Activated CD4-positive, alpha-beta T cell treated with anti-CD3 and anti-CD28 coated beads, Interleukin-2, amount 10 ng/mL, durations not matched to agents 24 days and 14 days (primary cell): ENCODE measurements at regions of chr3 and their contacts with region 1.

Region 1: DNA sequence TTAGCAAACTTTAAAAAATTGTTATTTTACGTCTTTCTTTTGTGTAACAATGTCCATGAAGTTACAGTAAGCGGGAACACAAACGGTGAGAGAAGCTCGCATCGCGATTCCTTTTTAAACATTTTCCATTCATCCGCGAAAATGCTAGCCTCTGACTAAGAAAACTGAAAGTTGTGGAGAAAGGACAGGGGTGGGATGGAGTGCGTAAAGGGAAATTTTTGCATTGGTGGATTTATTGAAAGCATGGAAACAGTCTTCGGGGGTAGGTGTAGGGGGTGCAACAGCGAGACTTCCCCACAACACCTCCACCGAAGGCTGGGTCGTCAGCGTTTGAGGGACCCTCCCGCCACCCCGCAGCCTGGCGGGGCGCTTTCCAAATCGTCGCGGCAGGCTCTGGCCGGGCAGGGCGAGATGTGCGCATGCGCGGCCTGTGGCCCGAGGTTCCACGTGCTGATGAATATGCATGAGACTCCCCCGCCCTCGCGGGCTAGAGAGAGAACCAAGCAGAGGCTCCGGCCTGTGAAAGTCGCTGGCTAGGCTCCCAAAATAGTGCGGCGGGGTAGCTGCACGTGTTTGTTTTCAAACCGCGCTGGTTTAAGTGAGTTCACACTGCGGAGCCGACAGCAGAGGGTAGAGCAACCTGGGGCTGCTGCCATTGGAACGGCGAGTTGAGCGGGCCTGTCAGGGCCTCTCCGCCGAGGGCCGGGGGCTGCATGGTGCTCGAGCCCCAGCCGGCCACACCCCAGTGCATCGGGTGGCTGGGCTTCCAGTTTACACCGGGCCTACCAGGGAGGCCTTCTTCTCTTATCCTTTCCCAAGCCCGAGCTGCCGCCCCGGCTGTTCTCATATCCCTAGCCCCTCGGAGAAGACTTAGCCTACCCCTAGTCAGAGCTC is 9.9 kb downstream of the ZIC1 start:
- DNase-seq: no peak
- H3K4me3 Mint-ChIP-seq: no peak overlapping the region
- H3K27ac Mint-ChIP-seq: no peak overlapping the region
- H3K4me1 Mint-ChIP-seq: no peaks in the 10 kb centered on the region
- H3K27me3 Mint-ChIP-seq: peaks cover 71% of the 10 kb centered on the region

Region 2: GRCh38 chr3:147377412-147378367 is 41.4 kb before region 1 on chr3:
- intact Hi-C with region 1: loop called (anchors 5 kb)
- DNase-seq: no peak
- H3K4me3 Mint-ChIP-seq: no peak overlapping the region
- H3K27ac Mint-ChIP-seq: no peak overlapping the region
- H3K4me1 Mint-ChIP-seq: no peaks in the 10 kb centered on the region
- H3K27me3 Mint-ChIP-seq: peaks cover 70% of the 10 kb centered on the region

Region 3: GRCh38 chr3:147384210-147385058 is 34.6 kb before region 1 on chr3:
- intact Hi-C with region 1: loop called (anchors 5 kb)
- DNase-seq: no peak
- H3K4me3 Mint-ChIP-seq: no peak overlapping the region
- H3K27ac Mint-ChIP-seq: no peak overlapping the region
- H3K4me1 Mint-ChIP-seq: no peaks in the 10 kb centered on the region
- H3K27me3 Mint-ChIP-seq: peaks cover 80% of the 10 kb centered on the region

Region 4: DNA sequence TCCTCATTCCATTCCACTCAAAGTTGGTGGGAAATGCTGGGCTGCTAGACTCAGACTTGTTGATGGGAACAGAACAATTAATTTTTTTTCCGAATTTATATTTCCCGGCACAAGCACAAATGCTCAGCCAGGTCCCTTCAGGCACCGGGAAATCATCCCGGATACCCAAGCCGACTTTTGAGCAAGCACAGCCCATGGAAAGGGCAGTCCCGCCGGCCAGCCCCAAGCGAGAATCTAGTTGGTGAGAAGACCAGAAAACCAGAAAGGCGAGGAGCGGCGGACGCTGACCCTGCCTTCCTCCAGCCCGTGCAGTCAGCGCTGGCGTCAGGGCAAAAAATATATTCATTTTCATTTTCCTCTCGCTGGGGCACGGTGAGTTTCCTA is 11.9 kb before region 1 on chr3:
- intact Hi-C with region 1: loop called (anchors 2 kb)
- DNase-seq: no peak
- H3K4me3 Mint-ChIP-seq: no peak overlapping the region
- H3K27ac Mint-ChIP-seq: no peak overlapping the region
- H3K4me1 Mint-ChIP-seq: peaks cover 14% of the 10 kb centered on the region
- H3K27me3 Mint-ChIP-seq: peaks cover 74% of the 10 kb centered on the region